Activated naive CD4-positive, alpha-beta T cell treated with anti-CD3 and anti-CD28 coated beads, Interleukin-2, amount 10 ng/mL, durations not matched to agents 7 days and 5 days (primary cell): ENCODE measurements at regions of chr10 and their contacts with region 1.

Region 1: DNA sequence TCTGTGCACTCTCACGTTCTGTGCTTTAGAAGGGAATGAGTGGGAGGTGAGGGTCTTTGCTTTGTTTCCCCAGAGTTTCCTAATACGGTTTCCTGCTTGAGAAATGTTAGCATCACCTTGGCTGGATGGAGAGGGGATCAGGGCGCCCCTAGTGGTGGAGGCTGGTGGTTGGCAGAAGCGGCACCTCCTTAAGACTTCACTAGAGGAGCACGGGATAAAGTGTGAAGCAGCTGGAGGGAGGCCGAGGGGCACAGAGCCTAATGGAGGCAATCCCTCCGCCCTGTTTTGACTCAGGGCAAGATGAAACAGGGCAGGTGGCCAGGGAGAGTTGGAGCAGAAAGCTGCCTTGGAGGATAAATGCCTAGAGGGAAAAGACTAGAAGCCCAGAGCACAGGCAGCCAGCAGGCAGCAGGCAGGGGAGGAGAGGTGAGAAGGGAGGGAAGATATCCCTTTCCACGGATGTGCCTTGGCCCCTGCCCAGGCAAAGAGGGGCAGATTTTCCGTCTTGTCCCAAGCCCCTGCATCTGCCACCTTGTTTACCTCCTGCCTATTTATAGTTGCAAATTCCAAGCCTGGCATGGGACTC is 56.0 kb upstream of the BTRC start:
- DNase-seq: peak; percentile 85
- H3K4me3 Mint-ChIP-seq: no peak overlapping the region
- H3K27ac Mint-ChIP-seq: no peak overlapping the region
- H3K4me1 Mint-ChIP-seq: no peaks in the 10 kb centered on the region
- H3K27me3 Mint-ChIP-seq: peaks cover 90% of the 10 kb centered on the region

Region 2: GRCh38 chr10:101346177-101346576 is 48.2 kb after region 1 on chr10:
- CTCF ChIA-PET with region 1: no interaction called
- DNase-seq: no peak
- H3K4me3 Mint-ChIP-seq: no peak overlapping the region
- H3K27ac Mint-ChIP-seq: no peak overlapping the region
- H3K4me1 Mint-ChIP-seq: no peaks in the 10 kb centered on the region
- H3K27me3 Mint-ChIP-seq: peaks cover 28% of the 10 kb centered on the region

Region 3: GRCh38 chr10:101441541-101442455 is 143.8 kb after region 1 on chr10:
- CTCF ChIA-PET with region 1: interaction called, 13 read pairs
- DNase-seq: peak; percentile 40
- H3K4me3 Mint-ChIP-seq: no peak overlapping the region
- H3K27ac Mint-ChIP-seq: no peak overlapping the region
- H3K4me1 Mint-ChIP-seq: peaks cover 2% of the 10 kb centered on the region
- H3K27me3 Mint-ChIP-seq: no peaks in the 10 kb centered on the region

Region 4: GRCh38 chr10:101467286-101467770 is 169.3 kb after region 1 on chr10:
- CTCF ChIA-PET with region 1: interaction called, 15 read pairs
- DNase-seq: peak; percentile 41
- H3K4me3 Mint-ChIP-seq: no peak overlapping the region
- H3K27ac Mint-ChIP-seq: no peak overlapping the region
- H3K4me1 Mint-ChIP-seq: peaks cover 4% of the 10 kb centered on the region
- H3K27me3 Mint-ChIP-seq: peaks cover 4% of the 10 kb centered on the region